Left cardiac atrium (tissue), 4 donors: ENCODE measurements at regions of chr3 and their contacts with region 1.

Region 1: GRCh38 chr3:146865175-146865755 is 260.1 kb upstream of the PLSCR5 start:
- DNase-seq: no peak
- ATAC-seq: no peak

Region 2: DNA sequence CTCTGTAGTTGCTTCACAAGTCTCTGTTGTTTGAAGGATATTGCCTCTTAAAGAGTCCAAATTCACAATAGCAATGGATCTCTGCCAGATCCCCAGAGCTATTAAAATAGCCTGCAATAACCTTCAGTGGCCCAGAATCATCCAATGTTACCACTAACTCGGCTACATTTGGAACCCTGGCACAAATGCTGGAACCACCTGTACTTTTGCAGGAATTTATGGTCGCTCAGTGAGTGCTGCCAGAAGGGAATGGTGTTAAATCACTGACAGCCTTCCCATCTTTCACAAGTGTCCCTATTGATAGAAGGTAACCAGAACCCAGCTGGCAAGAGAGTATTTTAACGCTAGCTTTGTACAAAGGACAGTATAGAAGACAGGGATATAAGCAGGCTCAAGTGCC is 38.7 kb after region 1 on chr3:
- intact Hi-C with region 1: loop called in 1 of 2 experiments (anchors 5 kb)
- DNase-seq: peak; percentile 40
- ATAC-seq: peak; percentile 92 to 96